ENCODE measurements at regions of chr10 and their contacts with region 1.

Region 1: GRCh38 chr10:6014241-6014761 is 37.0 kb upstream of the IL15RA start:
- DNase-seq: no peak
- ATAC-seq: peak; percentile 29

Region 2: DNA sequence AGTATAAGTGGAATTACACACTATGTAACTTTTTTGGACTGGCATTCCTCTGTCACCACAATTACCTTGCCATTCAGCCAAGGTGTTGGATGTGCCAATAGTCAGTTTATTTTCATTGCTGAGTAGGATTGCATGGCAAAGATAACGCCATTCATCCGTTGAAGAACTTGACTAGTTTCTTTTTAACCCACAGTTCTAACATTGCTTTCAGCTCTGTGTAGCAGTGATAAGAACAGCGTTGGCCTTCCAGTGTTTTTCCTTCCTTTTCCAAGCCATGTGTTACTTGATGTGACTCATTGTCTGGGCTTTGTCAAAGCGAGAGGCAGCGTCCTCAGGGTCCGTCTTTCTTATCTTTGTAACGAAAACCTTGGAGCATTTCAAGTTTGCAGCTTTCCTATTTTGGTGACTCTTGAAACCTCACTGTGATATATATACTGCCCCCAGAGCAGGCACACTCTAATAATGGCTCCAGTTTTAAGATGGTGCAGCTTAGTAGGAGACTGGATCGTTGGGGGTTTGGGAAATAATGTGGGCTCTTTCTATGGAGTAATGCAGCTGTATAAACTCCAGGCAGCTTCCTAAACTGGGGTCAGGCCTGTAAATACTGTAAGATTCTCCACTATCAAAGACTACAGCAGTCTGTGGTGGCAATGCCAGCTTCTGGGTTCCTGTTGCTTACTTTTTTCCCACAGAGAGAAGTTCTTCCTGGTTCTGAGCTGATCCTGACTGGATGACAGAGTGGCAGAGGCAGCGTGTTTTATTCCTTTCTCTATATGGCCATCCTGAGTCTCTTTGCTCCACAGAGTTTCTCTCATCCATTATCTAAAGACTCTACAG is 1146.6 kb before region 1 on chr10:
- intact Hi-C with region 1: no loop called
- DNase-seq: no peak
- ATAC-seq: peak; percentile 98

Region 3: GRCh38 chr10:6072215-6072934 is 58.1 kb after region 1 on chr10:
- intact Hi-C with region 1: loop called (anchors 5 kb)
- DNase-seq: no peak
- ATAC-seq: peak; percentile 72

Region 4: GRCh38 chr10:6401562-6402348 is 387.5 kb after region 1 on chr10:
- intact Hi-C with region 1: loop called (anchors 2 kb)
- DNase-seq: peak; percentile 82
- ATAC-seq: peak; percentile 96

Measured in Right ventricle myocardium inferior (tissue), 1 donor.